ENCODE measurements at regions of chr13 and their contacts with region 1.

Region 1: DNA sequence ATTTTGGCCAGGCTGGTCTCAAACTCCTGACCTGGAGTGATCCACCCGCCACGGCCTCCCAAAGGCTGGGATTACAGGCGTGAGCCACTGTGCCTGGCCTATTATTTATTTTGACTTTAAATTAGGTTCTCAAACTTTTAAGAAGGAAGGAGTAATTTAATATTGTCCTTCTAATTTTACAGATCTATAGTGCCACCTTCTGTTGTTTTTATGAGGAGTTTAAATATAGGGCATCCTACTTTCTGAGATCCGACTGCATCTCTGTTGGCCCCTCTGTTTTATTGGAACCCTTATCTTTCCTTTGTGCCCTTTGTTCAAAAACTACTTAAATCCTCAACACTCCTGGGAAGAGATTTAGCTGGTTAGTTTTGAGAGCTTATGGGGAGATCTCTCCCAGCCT is 25.4 kb upstream of the ZMYM5 start:
- DNase-seq: no peak
- H3K4me3 Mint-ChIP-seq: no peak overlapping the region
- H3K27ac Mint-ChIP-seq: no peak overlapping the region
- H3K4me1 Mint-ChIP-seq: no peaks in the 10 kb centered on the region
- H3K27me3 Mint-ChIP-seq: no peaks in the 10 kb centered on the region
- CTCF ChIP-seq: no peak

Region 2: DNA sequence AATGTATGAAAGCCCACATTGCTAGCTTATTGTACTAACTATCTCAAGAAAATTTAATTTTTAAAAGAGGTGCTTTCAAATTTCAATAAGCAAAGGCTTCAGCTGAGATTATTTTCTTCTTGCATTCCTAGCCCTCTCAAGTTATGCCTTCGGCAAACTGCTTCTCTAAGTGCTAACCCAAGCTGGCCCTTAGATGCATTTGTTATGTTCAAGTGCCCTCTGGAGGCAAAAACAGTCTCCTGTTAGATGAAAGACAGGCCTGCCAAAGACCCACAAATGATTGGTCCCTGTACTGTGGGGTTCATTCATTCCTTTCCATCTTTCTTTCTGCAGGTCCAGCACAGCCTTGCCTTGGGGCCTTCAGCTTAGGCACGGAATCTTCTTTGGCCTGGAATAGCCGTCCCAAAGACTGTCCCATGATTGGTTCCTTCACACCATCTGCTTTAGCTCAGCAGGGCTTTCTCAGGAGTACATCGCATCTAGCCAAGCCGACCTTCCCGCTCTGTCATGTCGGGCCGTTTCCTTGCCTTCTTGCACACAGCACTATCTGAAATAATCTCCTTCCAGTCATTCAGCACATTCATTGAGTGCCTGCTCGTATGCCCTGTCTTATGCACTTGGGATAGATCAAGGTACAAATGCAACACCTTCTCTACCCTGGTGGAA is 301.0 kb before region 1 on chr13:
- CTCF ChIA-PET with region 1: no interaction called
- intact Hi-C with region 1: loop called (anchors 2 kb)
- DNase-seq: peak; percentile 44
- H3K4me3 Mint-ChIP-seq: no peak overlapping the region
- H3K27ac Mint-ChIP-seq: no peak overlapping the region
- H3K4me1 Mint-ChIP-seq: no peaks in the 10 kb centered on the region
- H3K27me3 Mint-ChIP-seq: peaks cover 13% of the 10 kb centered on the region
- CTCF ChIP-seq: peak; percentile 60

Measured in Calu3 (cell line).